ENCODE measurements at regions of chr3 and their contacts with region 1.

Region 1: DNA sequence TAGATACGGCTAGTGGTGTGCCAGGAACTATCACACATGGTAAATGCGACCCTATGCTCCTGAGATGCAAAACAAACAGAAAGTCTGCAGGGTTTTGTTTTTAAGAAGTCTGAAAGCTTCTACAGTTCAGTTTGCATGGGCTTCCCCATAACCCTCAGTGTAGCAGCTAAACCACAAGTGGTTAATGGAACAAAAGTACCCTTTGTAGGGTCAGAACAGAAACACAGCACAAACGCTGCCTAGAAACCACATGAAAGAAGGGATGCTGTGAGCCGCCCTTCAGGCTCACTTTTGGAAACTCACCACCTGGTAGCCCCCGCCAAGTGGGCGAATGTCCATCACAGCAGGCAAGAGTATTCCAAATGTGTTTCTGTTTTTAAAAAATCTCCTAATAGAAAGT is 46.2 kb downstream of the CTDSPL start:
- DNase-seq: peak; percentile 95
- ATAC-seq: peak; percentile 2; the same call in 1 of the 3 replicates
- H3K4me3 ChIP-seq: no peak overlapping the region; a peak in 1 of 6 replicates
- H3K27ac ChIP-seq: peak overlapping the region; percentile 88
- H3K4me1 ChIP-seq: peaks cover 100% of the 10 kb centered on the region
- H3K27me3 ChIP-seq: no peaks in the 10 kb centered on the region
- CTCF ChIP-seq: no peak
- EP300 ChIP-seq: peak in 1 of 2 experiments; percentile 67; a peak in 2 of 4 replicates
- POLR2A ChIP-seq: no peak
- RAD21 ChIP-seq: no peak

Region 2: DNA sequence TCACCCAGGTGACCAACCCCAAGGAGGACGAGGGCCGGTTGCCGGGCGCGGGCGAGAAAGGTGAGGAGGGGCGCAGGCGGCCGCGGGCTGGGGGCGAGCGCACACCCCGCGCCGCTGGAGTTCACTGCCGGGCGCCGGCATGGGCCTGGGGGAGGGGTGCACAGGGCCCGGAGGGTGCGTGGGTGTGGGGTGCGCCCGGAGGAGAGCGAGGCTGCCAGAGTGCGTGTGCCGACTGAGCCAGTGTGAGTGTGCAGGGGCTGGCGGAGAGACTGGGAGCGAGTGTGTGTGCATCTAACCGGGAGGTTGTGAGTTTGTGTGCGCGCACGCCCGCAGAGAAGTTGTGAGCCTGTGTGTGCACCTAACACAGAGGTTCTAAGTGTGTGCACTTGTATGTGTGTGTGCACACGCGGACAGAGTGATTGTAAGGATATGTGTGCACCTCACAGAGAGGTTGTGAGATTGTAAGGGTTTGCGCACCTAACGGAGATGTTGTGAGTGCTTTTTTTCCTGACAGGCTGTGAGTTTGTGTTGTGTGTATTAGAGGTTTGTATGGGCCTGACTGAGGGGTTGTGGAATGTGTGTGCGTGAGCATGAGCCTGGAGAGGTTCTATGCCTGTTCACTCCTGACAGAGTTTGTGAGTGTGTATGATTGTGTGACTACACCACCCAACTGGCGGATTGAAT is 45.5 kb before region 1 on chr3:
- CTCF ChIA-PET with region 1: no interaction called
- POLR2A ChIA-PET with region 1: interaction called, 14 read pairs
- in situ Hi-C with region 1: no loop called
- intact Hi-C with region 1: loop called (anchors 1 kb)
- DNase-seq: no peak
- ATAC-seq: peak; percentile 6; the same call in 2 of the 3 replicates
- H3K4me3 ChIP-seq: peak overlapping the region; percentile 77 to 96 (median 93)
- H3K27ac ChIP-seq: peak overlapping the region; percentile 71
- H3K4me1 ChIP-seq: peaks cover 53% of the 10 kb centered on the region
- H3K27me3 ChIP-seq: no peaks in the 10 kb centered on the region; a peak in 1 of 5 replicates
- CTCF ChIP-seq: no peak
- EP300 ChIP-seq: no peak
- POLR2A ChIP-seq: no peak
- RAD21 ChIP-seq: no peak

Region 3: GRCh38 chr3:37892927-37893600 is 14.8 kb before region 1 on chr3:
- CTCF ChIA-PET with region 1: no interaction called
- POLR2A ChIA-PET with region 1: interaction called, 33 read pairs
- in situ Hi-C with region 1: no loop called
- intact Hi-C with region 1: loop called (anchors 2 kb)
- DNase-seq: peak; percentile 85
- ATAC-seq: peak; percentile 100
- H3K4me3 ChIP-seq: peak overlapping the region in 1 of 3 experiments; percentile 11; a peak in 1 of 6 replicates
- H3K27ac ChIP-seq: peak overlapping the region; percentile 54
- H3K4me1 ChIP-seq: peaks cover 66% of the 10 kb centered on the region
- H3K27me3 ChIP-seq: no peaks in the 10 kb centered on the region
- CTCF ChIP-seq: no peak
- EP300 ChIP-seq: peak in 1 of 2 experiments; percentile 57; a peak in 1 of 4 replicates
- POLR2A ChIP-seq: no peak
- RAD21 ChIP-seq: no peak

Region 4: DNA sequence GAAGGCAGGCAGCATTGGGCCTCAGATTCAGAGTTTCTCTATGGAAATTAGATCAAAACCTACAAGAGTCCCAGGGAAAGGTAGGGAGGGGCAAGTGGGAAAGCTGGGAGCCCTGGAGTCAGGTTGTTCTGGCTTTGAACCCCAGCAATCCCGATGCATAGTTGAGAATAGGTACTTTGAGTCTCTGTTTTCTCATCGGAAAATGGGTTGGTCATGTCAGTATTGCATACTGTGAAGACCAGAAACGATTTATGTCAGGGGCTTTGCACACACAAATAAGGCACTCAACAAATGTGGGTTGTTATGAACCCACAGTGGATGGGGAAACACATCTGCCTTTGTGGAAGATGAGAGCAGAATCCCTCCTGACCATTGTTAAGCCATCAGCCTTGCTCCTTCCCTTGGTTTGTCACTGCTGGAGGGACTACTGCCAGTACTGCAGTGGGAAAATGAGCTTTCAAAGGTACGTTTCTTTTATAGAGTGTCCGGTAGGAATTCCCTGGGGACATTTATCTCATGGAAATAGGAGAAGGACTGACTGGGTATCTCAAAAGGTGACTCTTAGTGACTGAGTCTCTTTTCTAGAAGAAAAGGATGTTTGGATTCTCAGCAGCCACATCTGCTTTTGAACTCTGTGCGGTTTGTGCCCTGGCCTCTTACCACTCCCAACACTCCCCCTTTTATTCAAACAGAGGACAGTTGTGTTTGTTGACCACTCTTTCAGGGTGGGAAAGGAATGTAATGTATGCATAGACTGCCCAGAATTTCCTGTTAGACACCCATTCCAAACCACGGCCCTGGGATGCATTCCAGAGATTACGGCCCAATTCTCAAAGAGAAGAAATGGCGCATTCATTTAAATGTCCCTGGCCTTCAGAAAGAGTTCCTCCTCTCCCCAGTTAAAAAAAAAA is 28.1 kb after region 1 on chr3:
- CTCF ChIA-PET with region 1: no interaction called
- POLR2A ChIA-PET with region 1: interaction called, 72 read pairs
- in situ Hi-C with region 1: no loop called
- intact Hi-C with region 1: loop called (anchors 2 kb)
- DNase-seq: peak; percentile 98
- ATAC-seq: peak; percentile 97
- H3K4me3 ChIP-seq: peak overlapping the region in 1 of 3 experiments; percentile 41; a peak in 2 of 6 replicates
- H3K27ac ChIP-seq: peak overlapping the region; percentile 86
- H3K4me1 ChIP-seq: peaks cover 95% of the 10 kb centered on the region
- H3K27me3 ChIP-seq: no peaks in the 10 kb centered on the region
- CTCF ChIP-seq: no peak
- EP300 ChIP-seq: peak in 1 of 2 experiments; percentile 92; a peak in 2 of 4 replicates
- POLR2A ChIP-seq: peak in 1 of 2 experiments; percentile 52; a peak in 2 of 4 replicates
- RAD21 ChIP-seq: no peak

Region 5: DNA sequence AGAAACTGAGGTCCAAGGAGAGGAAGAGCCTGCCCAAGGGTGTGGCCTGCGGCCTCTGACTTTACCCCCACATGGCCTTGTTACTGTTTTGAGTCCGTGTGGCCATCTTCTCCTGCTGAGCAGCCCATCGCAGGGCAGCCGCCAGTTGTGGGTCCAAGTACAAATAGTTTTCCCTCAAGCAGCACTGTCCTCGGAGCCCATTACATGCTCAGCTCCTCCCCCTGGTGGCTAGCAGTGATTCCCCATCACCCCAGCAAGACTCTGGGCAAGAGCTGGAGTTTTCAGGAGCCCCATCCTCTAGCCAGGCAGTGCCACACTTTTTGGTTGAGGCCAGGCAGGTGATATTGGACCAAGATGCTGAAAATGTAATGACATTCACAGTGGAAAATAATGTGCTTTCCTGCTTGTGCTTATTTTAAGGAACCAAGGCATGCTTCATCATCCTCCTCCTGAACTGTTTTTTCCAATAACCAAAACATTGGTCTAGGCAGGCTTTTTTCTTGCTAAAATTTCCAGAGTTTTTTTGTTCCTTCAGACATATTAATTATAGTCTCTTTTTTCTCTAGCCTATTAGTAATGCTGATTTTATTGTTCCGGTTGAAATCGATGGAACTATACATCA is 59.5 kb after region 1 on chr3:
- CTCF ChIA-PET with region 1: interaction called, 3 read pairs
- POLR2A ChIA-PET with region 1: interaction called, 20 read pairs
- in situ Hi-C with region 1: no loop called
- intact Hi-C with region 1: loop called (anchors 1 kb)
- DNase-seq: peak; percentile 56
- ATAC-seq: peak; percentile 83
- H3K4me3 ChIP-seq: no peak overlapping the region
- H3K27ac ChIP-seq: no peak overlapping the region
- H3K4me1 ChIP-seq: peaks cover 51% of the 10 kb centered on the region
- H3K27me3 ChIP-seq: no peaks in the 10 kb centered on the region
- CTCF ChIP-seq: peak; percentile 88
- EP300 ChIP-seq: no peak
- POLR2A ChIP-seq: no peak
- RAD21 ChIP-seq: peak; percentile 87

Measured in HepG2 (cell line).